Activated CD4-positive, alpha-beta T cell treated with anti-CD3 and anti-CD28 coated beads for 36 hours (primary cell): ENCODE measurements at regions of chr1 and their contacts with region 1.

Region 1: GRCh38 chr1:223811634-223812415 is 33.9 kb downstream of the TP53BP2 start:
- DNase-seq: no peak
- ATAC-seq: peak; percentile 53
- H3K4me3 Mint-ChIP-seq: no peak overlapping the region
- H3K27ac Mint-ChIP-seq: no peak overlapping the region
- H3K4me1 Mint-ChIP-seq: peaks cover 33% of the 10 kb centered on the region
- H3K27me3 Mint-ChIP-seq: no peaks in the 10 kb centered on the region

Region 2: GRCh38 chr1:223639331-223639749 is 172.5 kb before region 1 on chr1:
- CTCF ChIA-PET with region 1: no interaction called
- POLR2A ChIA-PET with region 1: no interaction called
- intact Hi-C with region 1: no loop called
- DNase-seq: peak; percentile 26
- ATAC-seq: peak; percentile 73
- H3K4me3 Mint-ChIP-seq: no peak overlapping the region
- H3K27ac Mint-ChIP-seq: no peak overlapping the region
- H3K4me1 Mint-ChIP-seq: peaks cover 8% of the 10 kb centered on the region
- H3K27me3 Mint-ChIP-seq: peaks cover 20% of the 10 kb centered on the region

Region 3: DNA sequence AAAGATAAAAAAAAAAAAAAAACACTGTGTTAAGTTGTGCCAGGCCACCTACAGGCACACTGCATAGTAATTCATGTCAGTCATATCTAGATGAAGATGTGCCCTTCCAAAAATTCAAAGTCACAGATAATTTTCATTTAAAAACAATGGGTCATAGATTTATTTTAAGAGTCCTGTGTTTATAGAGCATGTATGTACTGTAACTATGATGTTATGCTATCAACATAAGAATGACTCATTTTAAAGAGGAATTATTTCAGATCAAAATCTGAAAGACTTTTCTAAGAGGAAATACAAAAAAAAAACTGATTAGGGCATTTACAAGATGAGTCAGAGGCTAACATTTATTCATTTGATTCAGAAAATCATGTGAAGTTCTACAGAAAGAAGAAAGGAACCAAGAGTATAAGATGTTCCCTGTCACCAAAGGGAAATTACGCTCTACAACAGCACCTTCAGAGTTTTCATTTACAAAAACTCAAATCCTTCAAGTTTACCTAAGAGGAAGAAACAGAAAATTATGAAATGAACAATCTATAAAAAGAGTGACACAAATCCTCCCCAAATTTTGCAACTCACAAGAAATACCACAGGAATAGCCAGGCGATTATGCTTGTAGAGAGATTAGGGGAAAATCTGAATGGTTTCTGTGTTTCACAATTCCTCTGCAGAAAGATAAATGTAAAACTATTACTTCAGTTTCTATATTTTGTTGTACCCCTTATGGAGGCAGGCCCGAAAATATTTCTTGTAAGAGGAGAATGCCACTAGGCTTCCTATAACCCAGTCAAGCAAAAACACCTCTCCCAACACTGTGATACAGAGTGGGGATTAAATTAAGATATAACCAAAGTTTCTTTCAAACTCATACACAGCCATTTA is 20.2 kb after region 1 on chr1:
- CTCF ChIA-PET with region 1: interaction called, 18 read pairs
- POLR2A ChIA-PET with region 1: no interaction called
- intact Hi-C with region 1: no loop called
- DNase-seq: no peak
- ATAC-seq: peak; percentile 71
- H3K4me3 Mint-ChIP-seq: no peak overlapping the region
- H3K27ac Mint-ChIP-seq: no peak overlapping the region
- H3K4me1 Mint-ChIP-seq: peaks cover 29% of the 10 kb centered on the region
- H3K27me3 Mint-ChIP-seq: no peaks in the 10 kb centered on the region